ENCODE measurements at regions of chr14 and their contacts with region 1.

Region 1: DNA sequence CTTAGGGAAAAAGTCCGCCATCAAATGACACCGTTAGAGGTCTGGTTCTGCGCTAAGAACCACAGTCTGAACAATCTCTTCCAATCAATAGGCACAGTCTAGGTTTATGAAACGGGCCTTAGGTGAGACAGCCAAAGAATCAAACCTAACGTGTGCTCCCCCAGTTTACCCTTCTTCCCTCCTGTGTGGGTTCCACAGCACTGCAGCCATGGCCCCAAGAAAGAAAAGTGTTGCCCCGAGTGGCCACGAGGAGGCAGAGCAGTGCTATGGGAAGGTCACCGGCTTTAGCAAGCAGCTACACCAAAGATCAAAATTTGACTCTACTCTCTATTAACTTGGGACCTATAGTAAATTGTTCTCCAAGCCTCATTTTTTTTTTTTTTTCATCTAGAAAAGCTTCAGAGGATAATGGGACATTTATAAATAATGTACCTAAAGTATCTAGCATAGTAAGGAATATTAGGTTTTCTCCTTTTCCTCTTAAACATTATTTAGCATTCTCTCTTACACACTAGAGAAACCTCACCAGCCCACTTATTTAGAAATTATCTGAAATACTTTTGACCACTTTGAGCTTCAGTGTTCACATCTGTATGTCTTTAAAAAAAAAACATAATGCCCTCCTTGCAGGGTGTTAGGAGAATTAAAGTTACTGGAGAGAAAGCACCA is 70.2 kb upstream of the GPHB5 start:
- DNase-seq: peak; percentile 76
- H3K4me3 ChIP-seq: no peak overlapping the region
- H3K27ac ChIP-seq: no peak overlapping the region
- H3K4me1 ChIP-seq: no peaks in the 10 kb centered on the region
- H3K27me3 ChIP-seq: no peaks in the 10 kb centered on the region

Region 2: DNA sequence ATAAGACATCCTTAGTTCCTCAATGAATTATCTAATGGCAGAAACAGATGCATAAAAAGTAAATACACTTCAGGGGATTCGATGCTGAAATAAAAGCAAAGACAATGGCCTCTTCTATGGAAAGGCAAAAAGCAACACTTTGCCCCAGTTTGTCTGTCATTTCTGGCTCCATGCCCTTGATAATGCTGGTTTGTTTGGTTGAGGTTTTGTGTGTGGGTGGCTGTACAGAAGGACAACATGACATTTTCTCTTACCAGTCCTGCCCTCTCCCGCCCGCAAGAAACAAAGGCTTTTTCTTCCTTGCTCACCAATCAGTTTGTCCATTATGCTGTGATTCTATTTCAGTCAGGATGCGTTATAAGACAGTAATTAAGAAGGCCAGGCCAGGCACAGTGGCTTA is 270.8 kb after region 1 on chr14:
- in situ Hi-C with region 1: no loop called
- DNase-seq: no peak
- H3K4me3 ChIP-seq: no peak overlapping the region
- H3K27ac ChIP-seq: no peak overlapping the region
- H3K4me1 ChIP-seq: peaks cover 3% of the 10 kb centered on the region; the same call in 1 of the 2 replicates
- H3K27me3 ChIP-seq: no peaks in the 10 kb centered on the region

Region 3: DNA sequence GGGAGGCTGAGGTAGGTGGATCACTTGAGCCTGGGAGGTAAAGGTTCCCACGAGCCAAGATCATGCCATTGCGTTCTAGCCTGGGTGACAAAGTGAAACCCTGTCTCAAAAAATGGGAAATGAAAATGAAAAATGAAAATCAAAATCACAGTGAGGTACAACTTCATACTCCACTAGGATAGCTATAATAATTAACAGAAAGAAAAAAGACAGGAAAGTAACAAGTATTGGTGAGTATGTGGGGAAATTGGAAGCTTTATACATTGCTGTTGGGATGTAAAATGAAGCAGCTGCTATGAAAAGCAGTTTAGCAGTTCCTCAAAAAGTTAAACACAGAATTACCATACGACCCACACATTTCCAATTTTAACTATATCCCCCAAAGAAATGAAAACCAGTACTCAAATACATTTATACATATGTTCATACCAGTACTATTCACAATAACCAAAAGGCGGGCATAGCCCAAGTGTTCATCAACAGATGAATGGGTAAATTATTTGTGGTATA is 316.7 kb after region 1 on chr14:
- in situ Hi-C with region 1: no loop called
- DNase-seq: no peak
- H3K4me3 ChIP-seq: no peak overlapping the region
- H3K27ac ChIP-seq: no peak overlapping the region
- H3K4me1 ChIP-seq: no peaks in the 10 kb centered on the region
- H3K27me3 ChIP-seq: no peaks in the 10 kb centered on the region

Region 4: DNA sequence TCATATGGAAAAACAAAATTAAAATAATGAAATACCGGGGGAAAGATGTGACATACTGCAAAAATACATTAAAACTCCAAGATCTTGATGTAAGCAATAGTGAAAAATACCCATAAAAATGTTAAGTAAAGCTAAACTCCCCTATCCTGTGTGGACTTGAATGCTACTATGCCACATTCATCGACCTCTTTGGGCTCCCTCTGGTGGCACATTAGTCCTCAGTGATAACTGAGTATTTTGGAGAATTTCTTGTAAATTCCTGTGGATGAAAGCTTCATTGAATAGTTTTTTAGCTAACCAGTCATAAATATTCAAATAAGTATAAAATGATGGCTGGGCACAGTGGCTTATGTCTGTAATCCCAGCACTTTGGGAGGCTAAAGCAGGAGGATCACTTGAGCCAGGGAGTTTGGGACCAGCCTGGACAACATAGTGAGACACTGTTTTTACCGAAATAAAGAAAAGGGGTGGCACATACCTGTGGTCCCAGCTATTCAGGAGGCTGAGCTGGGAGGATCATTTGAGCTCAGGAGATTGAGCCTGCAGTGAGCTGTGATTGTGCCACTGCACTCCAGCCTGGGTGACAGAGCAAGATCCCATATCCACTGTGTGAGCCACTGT is 381.4 kb after region 1 on chr14:
- in situ Hi-C with region 1: loop called (anchors 25 kb)
- DNase-seq: peak; percentile 73
- H3K4me3 ChIP-seq: no peak overlapping the region
- H3K27ac ChIP-seq: no peak overlapping the region
- H3K4me1 ChIP-seq: no peaks in the 10 kb centered on the region
- H3K27me3 ChIP-seq: no peaks in the 10 kb centered on the region